ENCODE measurements at regions of chr4 and their contacts with region 1.

Region 1: DNA sequence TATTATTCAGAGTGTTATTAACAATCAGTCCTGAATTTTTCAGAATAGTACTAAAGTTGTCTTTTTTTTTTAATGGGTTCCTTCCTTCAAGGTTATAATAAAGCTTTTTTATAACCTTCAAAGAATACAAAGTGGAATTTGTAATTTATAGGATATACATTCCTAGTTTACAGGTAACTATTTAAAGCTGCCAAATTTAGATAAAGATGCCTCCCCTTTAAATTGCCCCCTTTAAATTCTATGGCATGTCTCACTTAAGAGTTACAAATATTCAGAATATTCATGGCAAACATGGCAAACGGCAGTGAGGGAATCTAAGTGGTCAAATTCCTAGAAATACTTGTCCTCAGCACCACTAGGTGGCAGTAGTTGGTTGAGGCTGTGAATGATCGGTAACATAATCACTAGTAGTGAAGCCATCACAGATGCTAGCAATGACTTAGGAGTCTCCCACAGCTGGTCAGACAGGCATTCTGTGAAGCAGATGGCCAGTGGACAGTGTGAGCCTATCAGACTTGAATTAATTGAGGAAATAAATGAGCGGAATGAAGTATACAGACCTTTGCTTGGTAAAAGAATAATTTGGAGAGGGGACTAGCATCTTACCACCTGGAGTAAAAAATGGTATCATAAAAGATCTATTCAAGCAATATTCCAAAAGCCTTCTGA is 86.4 kb downstream of the CBR4 start:
- DNase-seq: peak; percentile 20
- H3K4me3 Mint-ChIP-seq: no peak overlapping the region
- H3K27ac Mint-ChIP-seq: no peak overlapping the region
- H3K4me1 Mint-ChIP-seq: no peaks in the 10 kb centered on the region
- H3K27me3 Mint-ChIP-seq: no peaks in the 10 kb centered on the region

Region 2: GRCh38 chr4:167989815-167990214 is 933.8 kb before region 1 on chr4:
- intact Hi-C with region 1: no loop called
- DNase-seq: no peak
- H3K4me3 Mint-ChIP-seq: no peak overlapping the region
- H3K27ac Mint-ChIP-seq: no peak overlapping the region
- H3K4me1 Mint-ChIP-seq: no peaks in the 10 kb centered on the region
- H3K27me3 Mint-ChIP-seq: no peaks in the 10 kb centered on the region

Region 3: GRCh38 chr4:168514249-168514852 is 409.3 kb before region 1 on chr4:
- intact Hi-C with region 1: loop called (anchors 5 kb)
- DNase-seq: no peak
- H3K4me3 Mint-ChIP-seq: no peak overlapping the region
- H3K27ac Mint-ChIP-seq: no peak overlapping the region
- H3K4me1 Mint-ChIP-seq: peaks cover 25% of the 10 kb centered on the region
- H3K27me3 Mint-ChIP-seq: peaks cover 28% of the 10 kb centered on the region

Region 4: DNA sequence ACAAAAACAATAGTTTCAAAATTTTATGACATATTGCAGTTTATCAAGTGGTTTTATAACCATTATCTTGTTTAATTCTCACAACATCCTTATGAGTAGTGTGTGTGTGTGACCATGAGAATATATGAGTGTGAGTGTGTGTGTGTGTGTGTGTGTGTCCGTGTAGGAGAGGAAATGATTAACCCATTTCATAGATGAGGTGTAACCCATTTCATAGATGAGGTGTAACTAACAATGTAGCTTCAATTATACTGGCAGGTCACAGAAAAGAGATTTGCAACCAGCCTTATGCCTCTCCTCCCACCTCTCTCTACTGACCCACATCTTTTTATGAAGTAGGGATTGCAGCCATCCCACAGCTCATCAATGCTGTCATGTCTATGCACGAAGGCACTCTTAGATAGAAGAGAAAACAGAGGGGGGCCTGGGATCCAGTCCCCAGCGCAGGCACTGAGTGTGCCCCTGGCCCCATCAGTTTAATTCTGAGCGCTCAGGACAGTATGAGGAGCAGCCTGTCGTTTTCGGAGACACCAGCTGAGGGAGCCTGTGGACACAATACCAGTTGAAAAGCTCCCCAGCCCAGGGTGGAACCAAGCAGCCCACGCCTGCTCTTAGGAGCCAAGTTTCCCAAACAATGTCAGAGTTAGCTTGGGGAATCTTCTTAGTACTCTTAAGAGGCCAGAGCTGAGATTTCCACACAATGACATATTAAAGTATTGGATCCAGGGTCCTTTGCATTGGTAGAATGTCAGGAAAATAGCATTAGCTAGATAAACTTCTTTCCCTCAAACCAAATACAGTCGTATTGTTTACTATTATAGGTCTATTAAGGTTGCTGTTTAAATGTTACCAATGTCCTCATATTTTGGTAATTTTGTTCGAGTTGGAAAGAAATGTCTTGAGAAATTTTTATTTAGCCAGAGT is 338.2 kb before region 1 on chr4:
- intact Hi-C with region 1: loop called (anchors 5 kb)
- DNase-seq: no peak
- H3K4me3 Mint-ChIP-seq: no peak overlapping the region
- H3K27ac Mint-ChIP-seq: no peak overlapping the region
- H3K4me1 Mint-ChIP-seq: no peaks in the 10 kb centered on the region
- H3K27me3 Mint-ChIP-seq: peaks cover 11% of the 10 kb centered on the region

Region 5: DNA sequence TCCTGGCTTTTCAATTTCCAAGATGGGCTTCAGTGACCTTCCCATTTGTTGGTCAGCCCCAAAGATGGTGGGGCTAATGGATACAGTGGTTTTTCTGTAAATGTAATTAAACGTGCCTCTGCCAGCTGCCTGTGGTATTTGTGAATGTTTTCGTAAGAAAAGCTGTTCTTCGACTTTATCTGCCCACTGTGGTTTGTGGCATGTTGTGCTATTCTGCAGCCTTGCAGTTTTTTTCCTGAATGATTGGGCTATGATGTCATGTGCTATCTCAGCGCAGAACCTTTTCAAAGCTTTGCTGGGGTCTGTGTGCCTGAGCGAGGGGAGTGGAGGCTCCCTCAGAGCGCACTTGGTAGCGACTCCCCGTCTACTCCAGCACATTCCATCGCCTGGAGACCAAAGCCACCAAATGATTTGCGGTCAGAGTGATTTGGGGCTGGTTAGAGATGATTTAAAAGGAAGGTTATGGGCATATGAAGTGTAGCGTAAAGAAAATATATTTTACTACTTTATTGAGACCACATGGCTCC is 289.3 kb before region 1 on chr4:
- intact Hi-C with region 1: no loop called
- DNase-seq: peak; percentile 13
- H3K4me3 Mint-ChIP-seq: no peak overlapping the region
- H3K27ac Mint-ChIP-seq: no peak overlapping the region
- H3K4me1 Mint-ChIP-seq: peaks cover 15% of the 10 kb centered on the region
- H3K27me3 Mint-ChIP-seq: peaks cover 72% of the 10 kb centered on the region

Region 6: DNA sequence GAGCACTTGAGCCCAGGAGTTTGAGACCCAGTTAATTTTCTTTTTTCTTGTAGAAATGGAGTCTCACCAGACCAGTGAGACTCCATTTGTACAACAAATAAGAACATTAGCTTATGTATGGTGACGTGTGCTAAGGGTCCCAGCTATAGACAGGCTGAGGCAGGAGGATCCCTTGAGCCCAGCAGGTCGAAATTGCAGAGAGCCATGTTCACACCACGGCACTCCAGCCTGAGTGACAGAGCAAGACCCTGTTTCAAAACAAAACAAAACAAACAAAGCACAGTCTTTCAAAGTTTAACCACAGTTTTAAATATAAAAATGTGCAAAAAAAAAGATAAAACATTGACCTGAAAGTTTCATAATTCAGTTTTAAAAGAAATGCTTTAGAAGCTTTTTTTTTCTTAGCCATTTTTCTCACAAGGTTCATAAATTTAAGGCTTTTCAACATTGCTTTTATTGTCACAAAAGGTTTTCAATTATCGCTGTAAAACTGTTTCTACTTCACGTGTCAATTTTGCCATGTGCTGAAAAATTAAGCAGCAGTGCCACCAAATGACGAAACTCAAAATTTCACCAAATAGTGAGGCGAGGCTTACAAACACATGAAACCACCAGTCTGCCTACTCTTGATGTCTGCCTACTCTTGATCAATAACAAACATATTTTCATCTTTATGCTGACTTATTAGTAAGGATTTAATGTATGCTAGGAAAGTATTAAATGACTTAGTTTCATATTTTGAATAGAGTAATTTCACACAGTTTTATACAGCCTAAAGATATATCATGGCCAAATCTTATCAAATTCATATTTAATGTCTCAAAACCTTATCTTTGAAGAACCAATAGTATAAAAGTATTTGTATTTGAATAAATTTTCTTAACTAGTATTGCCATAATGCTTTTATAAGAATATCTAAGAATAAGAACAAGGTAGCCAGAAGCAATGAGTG is 562.4 kb after region 1 on chr4:
- intact Hi-C with region 1: loop called (anchors 1 kb)
- DNase-seq: no peak
- H3K4me3 Mint-ChIP-seq: no peak overlapping the region
- H3K27ac Mint-ChIP-seq: no peak overlapping the region
- H3K4me1 Mint-ChIP-seq: peaks cover 5% of the 10 kb centered on the region
- H3K27me3 Mint-ChIP-seq: no peaks in the 10 kb centered on the region

Region 7: GRCh38 chr4:169492438-169493163 is 568.9 kb after region 1 on chr4:
- intact Hi-C with region 1: loop called (anchors 2 kb)
- DNase-seq: peak; percentile 16
- H3K4me3 Mint-ChIP-seq: no peak overlapping the region
- H3K27ac Mint-ChIP-seq: no peak overlapping the region
- H3K4me1 Mint-ChIP-seq: no peaks in the 10 kb centered on the region
- H3K27me3 Mint-ChIP-seq: no peaks in the 10 kb centered on the region